K562 (cell line): ENCODE measurements at regions of chr3 and their contacts with region 1.

Region 1: DNA sequence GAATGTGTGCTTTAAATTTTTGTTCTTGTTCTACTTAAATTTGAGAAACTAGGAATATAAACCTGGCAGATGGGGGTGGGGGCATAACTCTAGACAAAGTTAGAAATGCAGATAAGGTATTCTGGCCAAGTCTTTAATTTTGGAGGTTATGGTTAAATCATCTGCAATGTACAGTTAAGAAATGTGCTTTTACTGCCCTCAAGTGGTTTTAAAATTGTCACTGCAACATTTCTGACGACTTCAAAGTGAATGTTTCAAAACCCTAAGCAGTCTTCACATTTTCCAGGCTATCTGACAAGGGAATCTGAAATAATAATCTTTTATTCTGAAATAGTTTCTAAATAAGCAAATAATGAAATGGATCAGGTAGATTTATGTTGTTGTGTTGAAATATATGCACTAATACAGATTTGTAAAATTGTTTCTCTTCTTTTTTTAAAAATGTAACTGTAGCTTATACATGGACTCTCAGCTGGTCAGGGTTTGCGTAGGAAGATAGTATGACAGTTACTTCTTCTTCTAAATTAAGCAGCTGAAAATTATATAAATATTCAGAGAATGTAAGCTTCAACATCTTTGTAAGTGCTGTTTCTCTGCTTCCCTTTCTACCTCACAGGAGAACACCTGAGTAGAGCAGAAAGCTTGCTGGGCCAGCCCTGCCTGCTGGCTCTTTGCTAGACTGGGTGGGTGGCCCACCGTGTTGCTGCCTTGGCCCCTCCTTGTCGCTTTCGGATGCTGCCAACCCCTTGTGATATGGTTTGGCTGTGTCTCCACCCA is 45.0 kb downstream of the SUCNR1 start:
- DNase-seq: peak in 3 of 4 experiments; percentile 9 to 59 (median 42)
- ATAC-seq: peak; percentile 87
- H3K4me3 ChIP-seq: no peak overlapping the region
- H3K27ac ChIP-seq: no peak overlapping the region
- H3K4me1 ChIP-seq: no peaks in the 10 kb centered on the region; a peak in 1 of 5 replicates
- H3K27me3 ChIP-seq: no peaks in the 10 kb centered on the region
- CTCF ChIP-seq: peak; percentile 42 to 82 (median 58); a peak in 5 of 6 replicates
- EP300 ChIP-seq: no peak
- POLR2A ChIP-seq: no peak
- RAD21 ChIP-seq: peak; percentile 94 to 95

Region 2: GRCh38 chr3:151168269-151169094 is 750.0 kb before region 1 on chr3:
- CTCF ChIA-PET with region 1: no interaction called
- POLR2A ChIA-PET with region 1: interaction called, 3 read pairs
- in situ Hi-C with region 1: no loop called
- intact Hi-C with region 1: loop called (anchors 10 kb)
- DNase-seq: peak; percentile 42 to 71 (median 52)
- ATAC-seq: peak; percentile 92
- H3K4me3 ChIP-seq: no peak overlapping the region
- H3K27ac ChIP-seq: no peak overlapping the region
- H3K4me1 ChIP-seq: no peaks in the 10 kb centered on the region
- H3K27me3 ChIP-seq: peaks cover 8 to 10% of the 10 kb centered on the region in 2 experiments; a peak in 3 of 5 replicates
- CTCF ChIP-seq: peak; percentile 76 to 79 (median 76)
- EP300 ChIP-seq: no peak
- POLR2A ChIP-seq: no peak
- RAD21 ChIP-seq: peak; percentile 69 to 80

Region 3: DNA sequence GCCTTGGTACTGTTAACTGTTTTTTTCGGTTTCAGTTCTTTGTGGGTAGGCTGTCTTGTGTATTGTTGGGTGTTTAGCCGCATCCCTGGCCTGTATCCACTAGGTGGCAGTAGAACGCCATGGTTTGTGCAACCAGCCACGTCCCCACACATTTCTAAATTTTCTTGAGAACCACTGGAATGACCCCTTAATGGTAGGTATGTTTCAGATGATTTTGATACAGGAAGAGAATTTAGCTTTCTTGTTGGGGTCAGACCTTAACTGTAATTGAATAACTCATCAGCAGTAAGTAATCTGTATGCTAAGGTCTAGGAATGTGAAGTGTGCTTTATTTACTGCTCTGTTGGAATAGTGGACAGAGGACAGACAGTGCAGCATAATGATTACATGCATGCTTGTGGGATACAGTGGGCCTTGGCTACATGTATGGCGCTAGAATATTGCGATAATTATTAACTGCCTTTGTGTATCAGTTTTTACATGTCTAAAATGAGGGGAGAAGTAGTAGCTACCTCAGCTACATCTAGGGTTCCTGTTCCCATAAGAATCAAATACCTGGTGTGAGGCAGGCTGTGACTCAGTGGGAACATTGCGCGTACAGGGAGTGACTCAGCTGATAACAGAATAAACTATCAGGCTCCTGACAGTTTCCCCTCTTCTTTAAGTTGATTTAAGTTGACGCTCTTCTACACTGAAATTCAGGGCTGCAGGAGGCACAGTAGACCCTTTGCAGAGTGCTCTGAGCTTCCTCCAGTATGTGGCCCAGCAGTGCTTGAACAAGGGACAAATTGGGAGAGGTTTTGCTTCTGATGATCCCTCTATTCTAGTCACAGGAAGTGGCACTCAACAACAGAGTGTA is 690.4 kb before region 1 on chr3:
- CTCF ChIA-PET with region 1: interaction called, 3 read pairs
- POLR2A ChIA-PET with region 1: no interaction called
- in situ Hi-C with region 1: no loop called
- intact Hi-C with region 1: loop called (anchors 2 kb)
- DNase-seq: peak; percentile 76 to 81 (median 77)
- ATAC-seq: peak; percentile 94
- H3K4me3 ChIP-seq: no peak overlapping the region
- H3K27ac ChIP-seq: no peak overlapping the region
- H3K4me1 ChIP-seq: no peaks in the 10 kb centered on the region
- H3K27me3 ChIP-seq: peaks cover 5 to 9% of the 10 kb centered on the region in 2 experiments
- CTCF ChIP-seq: peak; percentile 81 to 90 (median 86)
- EP300 ChIP-seq: no peak
- POLR2A ChIP-seq: no peak
- RAD21 ChIP-seq: peak; percentile 86 to 92

Region 4: GRCh38 chr3:151379083-151379734 is 539.2 kb before region 1 on chr3:
- CTCF ChIA-PET with region 1: no interaction called
- POLR2A ChIA-PET with region 1: no interaction called
- in situ Hi-C with region 1: no loop called
- intact Hi-C with region 1: loop called (anchors 1 kb)
- DNase-seq: peak in 3 of 4 experiments; percentile 7 to 49 (median 21)
- ATAC-seq: peak; percentile 98
- H3K4me3 ChIP-seq: no peak overlapping the region
- H3K27ac ChIP-seq: no peak overlapping the region
- H3K4me1 ChIP-seq: no peaks in the 10 kb centered on the region
- H3K27me3 ChIP-seq: peaks cover 3 to 6% of the 10 kb centered on the region in 2 experiments; a peak in 4 of 5 replicates
- CTCF ChIP-seq: peak; percentile 62 to 73 (median 65)
- EP300 ChIP-seq: no peak
- POLR2A ChIP-seq: no peak
- RAD21 ChIP-seq: peak; percentile 33 to 59

Region 5: GRCh38 chr3:151439652-151440129 is 478.8 kb before region 1 on chr3:
- CTCF ChIA-PET with region 1: interaction called, 7 read pairs
- POLR2A ChIA-PET with region 1: no interaction called
- in situ Hi-C with region 1: loop called (anchors 10 kb)
- intact Hi-C with region 1: loop called (anchors 1 kb)
- DNase-seq: peak; percentile 40 to 67 (median 44)
- ATAC-seq: peak; percentile 91
- H3K4me3 ChIP-seq: no peak overlapping the region
- H3K27ac ChIP-seq: no peak overlapping the region
- H3K4me1 ChIP-seq: no peaks in the 10 kb centered on the region
- H3K27me3 ChIP-seq: no peaks in the 10 kb centered on the region; a peak in 1 of 5 replicates
- CTCF ChIP-seq: peak; percentile 54 to 75 (median 71); a peak in 5 of 6 replicates
- EP300 ChIP-seq: no peak
- POLR2A ChIP-seq: no peak
- RAD21 ChIP-seq: peak; percentile 83 to 91

Region 6: GRCh38 chr3:151660885-151661284 is 257.6 kb before region 1 on chr3:
- CTCF ChIA-PET with region 1: no interaction called
- POLR2A ChIA-PET with region 1: no interaction called
- in situ Hi-C with region 1: no loop called
- intact Hi-C with region 1: loop called (anchors 5 kb)
- DNase-seq: no peak
- ATAC-seq: no peak
- H3K4me3 ChIP-seq: no peak overlapping the region
- H3K27ac ChIP-seq: no peak overlapping the region
- H3K4me1 ChIP-seq: no peaks in the 10 kb centered on the region
- H3K27me3 ChIP-seq: no peaks in the 10 kb centered on the region
- CTCF ChIP-seq: peak in 1 of 3 experiments; percentile 35; a peak in 2 of 6 replicates
- EP300 ChIP-seq: no peak
- POLR2A ChIP-seq: no peak
- RAD21 ChIP-seq: peak in 1 of 2 experiments; percentile 61; a peak in 3 of 4 replicates

Region 7: DNA sequence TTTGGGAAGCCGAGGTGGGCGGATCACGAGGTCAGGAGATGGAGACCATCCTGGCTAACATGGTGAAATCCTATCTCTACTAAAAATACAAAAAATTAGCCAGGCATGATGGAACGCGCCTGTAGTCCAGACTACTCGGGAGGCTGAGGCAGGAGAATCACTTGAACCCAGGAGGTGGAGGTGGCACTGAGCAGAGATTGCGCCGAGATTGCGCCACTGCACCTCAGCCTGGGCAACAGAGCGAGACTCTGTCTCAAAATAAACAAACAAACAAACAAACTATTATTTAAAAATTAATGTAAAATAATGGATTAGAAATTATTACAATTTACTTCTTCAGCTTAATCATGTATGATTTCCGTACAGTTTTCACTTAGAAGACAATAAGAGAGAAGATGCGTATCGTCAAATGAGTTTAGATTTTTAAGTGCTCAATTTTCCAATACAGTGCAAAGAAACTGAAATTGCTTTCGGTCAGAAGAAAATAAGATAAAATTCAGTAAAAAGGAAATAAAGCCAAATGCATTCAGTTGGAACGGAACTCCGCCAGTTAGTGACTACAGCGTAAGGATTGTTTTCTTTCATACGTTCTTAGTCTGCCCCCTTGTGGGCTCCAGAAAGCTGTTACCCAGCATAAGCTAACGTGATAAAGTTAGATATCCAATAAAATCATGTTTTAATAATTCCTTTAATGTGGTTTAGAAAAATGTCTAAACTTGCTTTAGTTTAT is 79.7 kb before region 1 on chr3:
- CTCF ChIA-PET with region 1: interaction called, 5 read pairs
- POLR2A ChIA-PET with region 1: interaction called, 3 read pairs
- in situ Hi-C with region 1: no loop called
- intact Hi-C with region 1: loop called (anchors 1 kb)
- DNase-seq: peak; percentile 43 to 85 (median 50)
- ATAC-seq: peak; percentile 87
- H3K4me3 ChIP-seq: no peak overlapping the region
- H3K27ac ChIP-seq: no peak overlapping the region
- H3K4me1 ChIP-seq: peaks cover 0 to 16% of the 10 kb centered on the region in 2 experiments; a peak in 3 of 5 replicates
- H3K27me3 ChIP-seq: no peaks in the 10 kb centered on the region
- CTCF ChIP-seq: peak; percentile 57 to 85 (median 70); a peak in 5 of 6 replicates
- EP300 ChIP-seq: no peak
- POLR2A ChIP-seq: no peak
- RAD21 ChIP-seq: peak; percentile 91 to 95